ENCODE measurements at regions of chr3 and their contacts with region 1.

Region 1: GRCh38 chr3:15113463-15113862 is 14.5 kb upstream of the RBSN start:
- DNase-seq: no peak
- H3K4me3 ChIP-seq: no peak overlapping the region
- H3K4me3 Mint-ChIP-seq: no peak overlapping the region
- H3K27ac ChIP-seq: no peak overlapping the region
- H3K27ac Mint-ChIP-seq: no peak overlapping the region
- H3K4me1 ChIP-seq: no peaks in the 10 kb centered on the region
- H3K4me1 Mint-ChIP-seq: peaks cover 3% of the 10 kb centered on the region
- H3K27me3 ChIP-seq: no peaks in the 10 kb centered on the region
- H3K27me3 Mint-ChIP-seq: peaks cover 3 to 9% (median 8%) of the 10 kb centered on the region in 3 donors
- CTCF ChIP-seq: no peak

Region 2: GRCh38 chr3:15241341-15241740 is 127.9 kb after region 1 on chr3:
- intact Hi-C with region 1: loop called in 1 of 2 experiments (anchors 10 kb)
- DNase-seq: peak; percentile 12 to 43 (median 27)
- H3K4me3 ChIP-seq: no peak overlapping the region
- H3K4me3 Mint-ChIP-seq: no peak overlapping the region
- H3K27ac ChIP-seq: no peak overlapping the region
- H3K27ac Mint-ChIP-seq: no peak overlapping the region
- H3K4me1 ChIP-seq: no peaks in the 10 kb centered on the region
- H3K4me1 Mint-ChIP-seq: no peaks in the 10 kb centered on the region
- H3K27me3 ChIP-seq: no peaks in the 10 kb centered on the region
- H3K27me3 Mint-ChIP-seq: no peaks in the 10 kb centered on the region
- CTCF ChIP-seq: peak; percentile 55